Activated naive CD4-positive, alpha-beta T cell treated with anti-CD3 and anti-CD28 coated beads for 36 hours (primary cell): ENCODE measurements at regions of chr6 and their contacts with region 1.

Region 1: GRCh38 chr6:149513915-149514314 is 29.1 kb upstream of the ZC3H12D start:
- DNase-seq: no peak
- H3K4me3 Mint-ChIP-seq: no peak overlapping the region
- H3K27ac Mint-ChIP-seq: peak overlapping the region; percentile 4
- H3K4me1 Mint-ChIP-seq: peaks cover 50% of the 10 kb centered on the region
- H3K27me3 Mint-ChIP-seq: no peaks in the 10 kb centered on the region

Region 2: DNA sequence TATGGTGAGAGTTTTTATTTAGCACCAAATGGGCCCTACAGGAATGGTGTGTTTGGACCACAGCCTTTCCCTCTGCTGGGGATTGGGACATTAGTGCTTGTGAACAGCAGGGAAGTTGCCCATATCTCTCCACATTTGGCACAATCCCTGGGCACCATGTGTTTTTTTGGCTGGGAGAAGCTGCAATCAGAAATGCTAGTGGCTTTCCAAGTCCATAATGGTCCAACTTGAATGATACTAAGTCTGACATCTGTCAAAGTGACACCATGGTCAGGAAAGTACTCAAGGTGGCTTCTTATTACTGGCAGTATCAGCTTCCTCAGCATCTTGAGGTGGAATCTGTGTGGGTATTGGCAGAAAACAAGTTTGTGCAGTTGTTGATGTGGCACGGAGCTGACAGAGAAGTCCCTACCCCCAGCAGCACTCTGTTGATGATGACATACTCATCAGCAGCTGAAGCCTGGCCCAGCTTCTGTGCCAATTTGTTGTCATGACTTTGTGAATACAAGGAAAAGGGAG is 1118.3 kb before region 1 on chr6:
- CTCF ChIA-PET with region 1: no interaction called
- intact Hi-C with region 1: no loop called
- DNase-seq: no peak
- H3K4me3 Mint-ChIP-seq: no peak overlapping the region
- H3K27ac Mint-ChIP-seq: no peak overlapping the region
- H3K4me1 Mint-ChIP-seq: no peaks in the 10 kb centered on the region
- H3K27me3 Mint-ChIP-seq: peaks cover 8% of the 10 kb centered on the region

Region 3: GRCh38 chr6:149082286-149082707 is 431.6 kb before region 1 on chr6:
- CTCF ChIA-PET with region 1: interaction called, 5 read pairs
- intact Hi-C with region 1: loop called (anchors 1 kb)
- DNase-seq: peak; percentile 97
- H3K4me3 Mint-ChIP-seq: no peak overlapping the region
- H3K27ac Mint-ChIP-seq: peak overlapping the region; percentile 41
- H3K4me1 Mint-ChIP-seq: peaks cover 54% of the 10 kb centered on the region
- H3K27me3 Mint-ChIP-seq: no peaks in the 10 kb centered on the region

Region 4: GRCh38 chr6:149335924-149336608 is 177.8 kb before region 1 on chr6:
- CTCF ChIA-PET with region 1: no interaction called
- intact Hi-C with region 1: loop called (anchors 5 kb)
- DNase-seq: peak; percentile 84
- H3K4me3 Mint-ChIP-seq: peak overlapping the region; percentile 59
- H3K27ac Mint-ChIP-seq: peak overlapping the region; percentile 97
- H3K4me1 Mint-ChIP-seq: peaks cover 82% of the 10 kb centered on the region
- H3K27me3 Mint-ChIP-seq: no peaks in the 10 kb centered on the region

Region 5: GRCh38 chr6:149451361-149452036 is 62.4 kb before region 1 on chr6:
- CTCF ChIA-PET with region 1: interaction called, 21 read pairs
- intact Hi-C with region 1: loop called (anchors 2 kb)
- DNase-seq: peak; percentile 53
- H3K4me3 Mint-ChIP-seq: no peak overlapping the region
- H3K27ac Mint-ChIP-seq: no peak overlapping the region
- H3K4me1 Mint-ChIP-seq: peaks cover 12% of the 10 kb centered on the region
- H3K27me3 Mint-ChIP-seq: no peaks in the 10 kb centered on the region

Region 6: GRCh38 chr6:149473080-149474052 is 40.5 kb before region 1 on chr6:
- CTCF ChIA-PET with region 1: interaction called, 15 read pairs
- intact Hi-C with region 1: no loop called
- DNase-seq: no peak
- H3K4me3 Mint-ChIP-seq: no peak overlapping the region
- H3K27ac Mint-ChIP-seq: no peak overlapping the region
- H3K4me1 Mint-ChIP-seq: peaks cover 69% of the 10 kb centered on the region
- H3K27me3 Mint-ChIP-seq: no peaks in the 10 kb centered on the region

Region 7: DNA sequence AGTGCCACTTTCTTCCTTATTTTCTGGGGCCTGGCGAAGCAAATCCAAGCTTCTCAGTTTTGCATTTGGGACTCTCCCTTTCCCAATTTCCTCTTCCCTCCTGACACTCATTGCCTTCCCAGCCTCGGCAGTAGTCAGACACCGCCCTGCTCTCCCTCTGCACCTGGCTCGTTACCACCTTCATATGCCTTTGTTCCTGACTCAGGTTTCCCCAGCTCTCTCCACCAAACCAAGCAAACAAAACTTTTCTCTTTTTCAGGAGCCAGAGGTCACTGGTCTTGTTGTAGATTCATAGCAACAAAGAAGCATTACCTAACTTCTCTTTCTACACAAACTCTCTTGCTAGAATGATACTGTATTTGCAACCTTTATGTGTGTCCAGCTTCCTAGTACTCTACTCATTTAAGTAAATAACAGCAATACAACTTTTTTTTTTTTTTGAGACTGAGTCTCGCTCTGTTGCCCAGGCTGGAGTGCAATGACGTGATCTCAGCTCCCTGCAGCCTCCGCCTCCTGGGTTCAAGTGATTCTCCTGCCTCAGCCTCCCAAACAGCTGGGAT is 20.1 kb before region 1 on chr6:
- CTCF ChIA-PET with region 1: interaction called, 31 read pairs
- intact Hi-C with region 1: loop called (anchors 1 kb)
- DNase-seq: no peak
- H3K4me3 Mint-ChIP-seq: no peak overlapping the region
- H3K27ac Mint-ChIP-seq: peak overlapping the region; percentile 91
- H3K4me1 Mint-ChIP-seq: peaks cover 85% of the 10 kb centered on the region
- H3K27me3 Mint-ChIP-seq: no peaks in the 10 kb centered on the region

Region 8: DNA sequence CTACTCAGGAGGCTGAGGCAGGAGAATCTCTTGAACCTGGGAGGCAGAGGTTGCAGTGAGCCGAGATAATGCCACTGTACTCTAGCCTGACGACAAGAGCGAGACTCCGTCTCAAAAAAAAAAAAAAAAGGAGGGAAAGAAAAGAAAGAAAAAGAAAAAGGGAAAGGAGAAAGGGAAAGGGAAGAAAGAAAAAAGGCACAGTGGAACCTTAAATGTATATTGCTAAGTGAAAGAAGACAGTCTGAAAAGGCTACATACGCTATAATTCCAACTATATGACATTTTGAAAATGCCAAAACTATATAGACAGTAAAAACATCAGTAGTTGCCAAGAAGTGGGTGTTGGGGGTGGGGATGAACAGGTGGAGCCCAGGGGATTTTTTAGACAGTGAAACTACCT is 15.7 kb after region 1 on chr6:
- CTCF ChIA-PET with region 1: interaction called, 17 read pairs
- intact Hi-C with region 1: no loop called
- DNase-seq: no peak
- H3K4me3 Mint-ChIP-seq: no peak overlapping the region
- H3K27ac Mint-ChIP-seq: peak overlapping the region; percentile 46
- H3K4me1 Mint-ChIP-seq: peaks cover 30% of the 10 kb centered on the region
- H3K27me3 Mint-ChIP-seq: no peaks in the 10 kb centered on the region

Region 9: GRCh38 chr6:149593443-149593842 is 79.5 kb after region 1 on chr6:
- CTCF ChIA-PET with region 1: no interaction called
- intact Hi-C with region 1: no loop called
- DNase-seq: no peak
- H3K4me3 Mint-ChIP-seq: no peak overlapping the region
- H3K27ac Mint-ChIP-seq: no peak overlapping the region
- H3K4me1 Mint-ChIP-seq: no peaks in the 10 kb centered on the region
- H3K27me3 Mint-ChIP-seq: no peaks in the 10 kb centered on the region